Gastrocnemius medialis (tissue), 4 donors: ENCODE measurements at regions of chr19 and their contacts with region 1.

Region 1: GRCh38 chr19:12440541-12441316 is at the start of gene ZNF443:
- DNase-seq: peak; percentile 96 to 98
- ATAC-seq: peak; percentile 98 to 99
- H3K4me3 ChIP-seq: peak within 1 kb of the TSS; percentile 78 to 83 (median 80)
- H3K27ac ChIP-seq: peak within 1 kb of the TSS; percentile 81 to 89 (median 84)
- H3K4me1 ChIP-seq: peaks cover 0 to 9% of the 10 kb centered on the region in 2 donors
- H3K27me3 ChIP-seq: no peaks in the 10 kb centered on the region
- CTCF ChIP-seq: no peak
- POLR2A ChIP-seq: peak; percentile 45 to 57
- total RNA-seq, gene ZNF443: 0.95 to 2.3 (median 1.7) TPM

Region 2: DNA sequence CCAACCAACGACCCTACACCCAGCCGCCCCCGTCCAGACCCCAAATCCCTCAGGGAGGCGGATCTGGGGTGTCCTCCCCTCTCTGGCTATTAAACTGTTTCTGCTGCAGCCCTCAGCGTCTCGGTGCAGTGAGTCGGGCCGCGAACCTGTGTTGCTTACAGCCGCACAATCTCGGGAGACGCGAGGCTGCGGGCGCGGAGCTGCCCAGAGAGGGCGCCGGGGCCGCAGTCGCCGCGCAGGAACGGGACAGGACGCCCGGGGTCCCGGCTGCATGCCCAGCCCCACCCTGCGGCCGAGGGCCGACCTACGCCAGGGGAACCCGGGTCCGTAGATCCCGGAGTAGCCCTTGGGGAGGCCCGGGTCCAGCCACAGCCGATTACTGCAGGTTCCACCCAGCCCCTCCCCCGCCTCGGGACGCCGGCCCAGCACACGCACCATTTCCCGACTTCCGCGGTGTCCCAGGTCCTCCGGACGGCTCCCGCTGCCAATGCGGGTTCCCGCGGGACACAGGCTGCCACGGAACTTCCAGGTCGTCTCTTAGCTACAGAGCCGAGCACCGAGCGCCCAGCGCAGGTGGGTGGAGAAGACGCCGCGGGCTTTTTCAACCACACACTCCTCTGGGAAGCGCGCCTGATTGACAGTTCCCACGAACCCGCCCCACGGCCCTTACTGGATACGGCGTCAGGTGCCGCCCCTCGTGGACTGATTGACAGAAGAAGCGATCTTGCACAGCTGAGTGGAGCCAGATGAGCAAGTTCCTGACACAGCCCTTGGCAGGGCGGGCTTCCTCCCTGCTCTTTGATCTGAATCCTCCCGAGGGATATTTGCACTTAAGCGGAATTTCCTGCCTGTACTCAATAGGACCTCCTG is 39.9 kb before region 1 on chr19 and contains the start of gene ZNF799:
- in situ Hi-C with region 1: no loop called
- intact Hi-C with region 1: loop called (anchors 5 kb)
- DNase-seq: peak; percentile 96
- ATAC-seq: peak; percentile 98 to 99
- H3K4me3 ChIP-seq: peak within 1 kb of the TSS; percentile 69 to 94 (median 80)
- H3K27ac ChIP-seq: peak within 1 kb of the TSS; percentile 83 to 95 (median 89)
- H3K4me1 ChIP-seq: peaks cover 5 to 6% of the 10 kb centered on the region in 2 donors
- H3K27me3 ChIP-seq: no peaks in the 10 kb centered on the region
- CTCF ChIP-seq: peak in 2 of 5 experiments; percentile 11 to 15
- POLR2A ChIP-seq: peak; percentile 49 to 57
- total RNA-seq, gene ZNF799: 1.3 to 3.6 (median 3.2) TPM

Region 3: DNA sequence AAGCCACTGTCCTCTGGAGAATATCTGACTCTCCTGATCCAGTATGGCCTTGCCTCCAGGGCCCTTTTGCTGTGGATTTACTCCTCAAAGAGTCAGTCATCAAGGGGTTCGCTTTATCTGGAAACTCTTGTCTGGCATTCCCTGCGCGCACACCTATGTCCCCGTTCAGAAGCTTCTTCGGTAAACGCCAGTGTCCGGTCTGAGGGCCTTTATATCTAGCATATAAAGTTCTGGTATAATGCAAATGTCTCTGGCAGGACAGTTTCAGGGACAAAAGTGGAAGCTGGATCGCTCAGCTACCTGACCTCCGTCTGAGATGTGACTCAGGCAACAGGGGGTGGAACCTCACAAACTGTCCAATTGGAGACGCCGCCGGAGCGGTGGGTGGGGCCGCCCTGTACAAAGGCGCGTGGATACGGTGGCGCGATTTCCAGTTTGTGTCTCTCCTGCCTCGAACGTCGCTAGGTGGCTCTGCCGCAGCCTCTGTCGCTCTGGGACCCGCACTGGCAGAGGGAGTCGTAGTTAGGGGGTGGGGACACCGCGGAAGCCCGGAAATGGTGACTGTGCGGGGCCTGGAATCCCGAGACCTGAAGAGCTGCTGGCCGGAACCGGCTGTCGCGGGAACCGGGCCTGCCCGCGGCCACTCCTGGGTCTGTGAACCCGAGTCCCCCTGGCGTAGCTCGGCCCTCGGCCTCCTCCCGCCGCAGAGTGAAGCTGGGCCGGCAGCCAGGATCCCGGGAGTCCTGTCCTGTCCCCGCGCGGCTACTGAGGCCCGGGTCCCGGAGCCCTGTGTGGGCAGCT is 54.5 kb after region 1 on chr19:
- in situ Hi-C with region 1: no loop called
- intact Hi-C with region 1: loop called (anchors 5 kb)
- DNase-seq: peak; percentile 89
- ATAC-seq: peak; percentile 98 to 99
- H3K4me3 ChIP-seq: peak overlapping the region; percentile 64 to 72 (median 69)
- H3K27ac ChIP-seq: peak overlapping the region; percentile 77 to 84 (median 80)
- H3K4me1 ChIP-seq: peaks cover 3% of the 10 kb centered on the region in 2 donors
- H3K27me3 ChIP-seq: no peaks in the 10 kb centered on the region
- CTCF ChIP-seq: peak in 2 of 5 experiments; percentile 38
- POLR2A ChIP-seq: peak; percentile 43 to 69